SK-N-SH (cell line): ENCODE measurements at regions of chr9 and their contacts with region 1.

Region 1: DNA sequence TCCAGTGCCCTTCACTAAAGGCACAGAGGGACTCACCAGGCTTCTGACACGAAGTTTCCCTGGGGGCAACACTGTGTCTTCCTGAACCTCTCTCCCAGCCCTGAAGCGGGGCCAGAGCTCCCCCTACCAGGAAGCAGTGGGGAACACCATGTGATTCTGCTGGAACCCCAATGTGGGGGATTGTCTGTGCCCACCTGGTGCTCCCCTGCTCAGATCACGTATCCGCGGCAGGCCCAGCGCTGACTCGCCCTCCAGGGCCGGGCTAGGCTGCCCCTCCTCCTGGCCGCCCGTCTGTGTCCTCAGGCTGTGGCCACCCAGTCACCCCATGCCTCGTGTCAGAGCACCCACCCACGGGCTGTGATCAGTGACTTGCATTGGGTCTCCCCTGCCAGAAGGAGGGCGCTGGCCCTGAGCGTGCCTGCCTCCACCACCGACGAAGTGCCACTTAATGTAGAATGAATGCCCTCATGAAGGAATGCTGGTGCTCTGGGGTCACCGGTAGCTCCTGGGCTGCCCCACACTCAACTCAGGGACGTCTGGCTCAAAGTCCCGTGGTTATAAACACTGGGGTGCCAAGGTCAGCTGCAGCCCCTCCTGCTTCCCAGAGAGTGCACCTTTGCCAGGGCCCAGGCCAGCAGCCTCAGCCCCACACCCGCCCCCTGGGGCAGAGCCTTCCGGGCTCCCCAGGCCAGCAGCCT is 22.1 kb downstream of the SARDH start:
- DNase-seq: peak; percentile 85
- H3K4me3 ChIP-seq: no peak overlapping the region
- H3K27ac ChIP-seq: peak overlapping the region; percentile 58 to 89; a peak in 3 of 4 replicates
- H3K4me1 ChIP-seq: peaks cover 21 to 29% of the 10 kb centered on the region in 2 experiments; a peak in 3 of 4 replicates
- H3K27me3 ChIP-seq: no peaks in the 10 kb centered on the region
- CTCF ChIP-seq: peak; percentile 50
- EP300 ChIP-seq: no peak
- RAD21 ChIP-seq: peak; percentile 80

Region 2: GRCh38 chr9:133306242-133307204 is 409.5 kb before region 1 on chr9:
- CTCF ChIA-PET with region 1: no interaction called
- POLR2A ChIA-PET with region 1: no interaction called
- DNase-seq: no peak
- H3K4me3 ChIP-seq: no peak overlapping the region
- H3K27ac ChIP-seq: no peak overlapping the region
- H3K4me1 ChIP-seq: no peaks in the 10 kb centered on the region
- H3K27me3 ChIP-seq: peaks cover 10% of the 10 kb centered on the region; the same call in 1 of the 2 replicates
- CTCF ChIP-seq: no peak
- EP300 ChIP-seq: no peak
- RAD21 ChIP-seq: no peak

Region 3: DNA sequence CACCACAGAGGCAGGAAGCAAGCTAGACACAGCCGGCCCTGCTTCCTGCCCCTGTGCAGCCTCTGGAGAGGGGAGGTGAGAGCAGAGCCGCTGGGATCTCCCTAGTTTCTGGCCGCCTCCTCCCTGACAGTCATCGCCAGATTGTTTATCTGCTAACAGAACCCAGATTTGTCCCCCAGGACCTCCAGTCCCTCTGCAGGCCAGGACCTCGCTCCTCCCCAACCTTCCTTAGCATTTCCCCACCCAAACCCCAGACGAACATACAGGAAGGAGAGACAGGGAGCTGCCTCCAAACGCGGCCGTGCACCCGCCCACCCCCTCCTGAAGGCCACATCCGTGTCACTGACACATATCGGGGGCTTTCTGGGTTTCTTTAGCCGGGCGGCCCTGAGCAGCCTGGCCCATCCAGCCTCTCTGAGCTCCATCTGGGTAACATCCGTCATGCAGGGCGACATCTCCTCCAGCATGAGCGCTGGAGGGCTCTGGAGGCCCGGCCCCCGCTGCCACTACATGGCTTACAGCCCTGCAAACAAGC is 32.4 kb before region 1 on chr9:
- CTCF ChIA-PET with region 1: interaction called, 15 read pairs
- POLR2A ChIA-PET with region 1: interaction called, 3 read pairs
- DNase-seq: peak; percentile 93
- H3K4me3 ChIP-seq: no peak overlapping the region
- H3K27ac ChIP-seq: peak overlapping the region in 1 of 2 experiments; percentile 97; a peak in 2 of 4 replicates
- H3K4me1 ChIP-seq: peaks cover 0 to 66% of the 10 kb centered on the region in 2 experiments; a peak in 2 of 4 replicates
- H3K27me3 ChIP-seq: no peaks in the 10 kb centered on the region
- CTCF ChIP-seq: no peak
- EP300 ChIP-seq: peak in 1 of 2 experiments; percentile 65; a peak in 2 of 4 replicates
- RAD21 ChIP-seq: no peak; the same call in 1 of the 2 replicates

Region 4: GRCh38 chr9:133726401-133727276 is 10.6 kb after region 1 on chr9:
- CTCF ChIA-PET with region 1: interaction called, 83 read pairs
- POLR2A ChIA-PET with region 1: no interaction called
- DNase-seq: peak; percentile 86
- H3K4me3 ChIP-seq: peak overlapping the region in 1 of 2 experiments; percentile 23; a peak in 1 of 4 replicates
- H3K27ac ChIP-seq: no peak overlapping the region
- H3K4me1 ChIP-seq: peaks cover 0 to 5% of the 10 kb centered on the region in 2 experiments; a peak in 1 of 4 replicates
- H3K27me3 ChIP-seq: no peaks in the 10 kb centered on the region
- CTCF ChIP-seq: peak; percentile 67
- EP300 ChIP-seq: no peak
- RAD21 ChIP-seq: peak; percentile 86

Region 5: GRCh38 chr9:133845440-133845839 is 129.4 kb after region 1 on chr9:
- CTCF ChIA-PET with region 1: no interaction called
- POLR2A ChIA-PET with region 1: no interaction called
- DNase-seq: peak; percentile 83
- H3K4me3 ChIP-seq: no peak overlapping the region
- H3K27ac ChIP-seq: peak overlapping the region; percentile 47 to 85
- H3K4me1 ChIP-seq: peaks cover 0 to 52% of the 10 kb centered on the region in 2 experiments; a peak in 1 of 4 replicates
- H3K27me3 ChIP-seq: no peaks in the 10 kb centered on the region
- CTCF ChIP-seq: no peak
- EP300 ChIP-seq: no peak
- RAD21 ChIP-seq: no peak